Panc1 (cell line): ENCODE measurements at regions of chr1 and their contacts with region 1.

Region 1: DNA sequence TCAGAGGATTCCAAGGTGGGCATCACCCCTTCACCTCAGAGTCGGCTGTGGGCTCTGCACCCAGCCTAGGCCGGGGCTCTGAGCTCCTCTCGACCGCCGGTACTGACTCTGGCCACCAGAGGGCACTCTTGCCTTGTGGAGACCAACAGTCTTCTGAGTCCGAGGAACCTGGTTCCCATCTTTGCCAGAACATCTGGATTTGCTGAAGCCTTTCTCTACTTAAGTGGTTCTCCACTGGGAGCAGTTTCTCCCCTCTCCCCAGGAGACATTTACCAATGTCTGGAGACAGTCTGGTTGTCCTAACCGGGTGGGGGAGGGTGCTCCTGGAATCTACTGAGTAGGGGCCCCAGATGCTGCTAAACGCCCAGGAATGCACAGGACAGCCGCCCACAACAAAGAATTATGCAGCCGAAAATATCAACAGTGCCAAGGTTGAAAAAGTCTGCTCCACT is 9.4 kb downstream of the ETV3L start:
- DNase-seq: peak; percentile 55
- ATAC-seq: peak; percentile 96
- H3K4me3 ChIP-seq: no peak overlapping the region
- H3K27ac ChIP-seq: no peak overlapping the region
- H3K4me1 ChIP-seq: no peaks in the 10 kb centered on the region
- H3K27me3 ChIP-seq: no peaks in the 10 kb centered on the region
- CTCF ChIP-seq: peak; percentile 94

Region 2: DNA sequence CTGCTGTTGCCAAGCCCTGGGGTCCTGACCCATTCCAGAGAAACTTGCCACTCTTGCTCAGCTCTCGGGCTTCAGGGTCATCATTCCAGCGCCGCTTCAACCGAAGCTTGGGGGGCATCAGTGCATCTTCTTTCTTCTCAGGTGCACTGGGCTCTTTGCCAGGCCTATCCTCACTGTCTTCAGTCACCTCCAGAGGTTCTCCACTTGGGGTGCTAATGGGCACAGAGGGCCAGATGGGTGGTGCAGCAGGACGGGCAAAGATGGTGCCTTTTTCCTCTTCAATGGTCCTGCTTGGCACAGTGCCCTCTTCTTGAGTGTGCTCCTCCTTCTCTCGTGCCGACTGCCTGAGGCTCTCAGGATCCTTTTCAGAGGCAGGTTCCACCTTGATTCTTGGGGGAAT is 34.6 kb after region 1 on chr1:
- CTCF ChIA-PET with region 1: interaction called, 11 read pairs
- POLR2A ChIA-PET with region 1: no interaction called
- in situ Hi-C with region 1: no loop called
- intact Hi-C with region 1: no loop called
- DNase-seq: no peak
- ATAC-seq: no peak
- H3K4me3 ChIP-seq: no peak overlapping the region
- H3K27ac ChIP-seq: no peak overlapping the region
- H3K4me1 ChIP-seq: no peaks in the 10 kb centered on the region
- H3K27me3 ChIP-seq: no peaks in the 10 kb centered on the region
- CTCF ChIP-seq: no peak

Region 3: GRCh38 chr1:157156058-157156541 is 65.9 kb after region 1 on chr1:
- CTCF ChIA-PET with region 1: interaction called, 85 read pairs
- POLR2A ChIA-PET with region 1: interaction called, 3 read pairs
- in situ Hi-C with region 1: no loop called
- intact Hi-C with region 1: loop called (anchors 1 kb)
- DNase-seq: no peak
- ATAC-seq: peak; percentile 88
- H3K4me3 ChIP-seq: peak overlapping the region in 1 of 2 experiments; percentile 24; a peak in 1 of 4 replicates
- H3K27ac ChIP-seq: no peak overlapping the region
- H3K4me1 ChIP-seq: no peaks in the 10 kb centered on the region; the same call in none of the 2 replicates
- H3K27me3 ChIP-seq: 0 out of 2 replicates have a peak, but pooled peaks cover 4% of the 10 kb centered on the region
- CTCF ChIP-seq: peak; percentile 97

Region 4: DNA sequence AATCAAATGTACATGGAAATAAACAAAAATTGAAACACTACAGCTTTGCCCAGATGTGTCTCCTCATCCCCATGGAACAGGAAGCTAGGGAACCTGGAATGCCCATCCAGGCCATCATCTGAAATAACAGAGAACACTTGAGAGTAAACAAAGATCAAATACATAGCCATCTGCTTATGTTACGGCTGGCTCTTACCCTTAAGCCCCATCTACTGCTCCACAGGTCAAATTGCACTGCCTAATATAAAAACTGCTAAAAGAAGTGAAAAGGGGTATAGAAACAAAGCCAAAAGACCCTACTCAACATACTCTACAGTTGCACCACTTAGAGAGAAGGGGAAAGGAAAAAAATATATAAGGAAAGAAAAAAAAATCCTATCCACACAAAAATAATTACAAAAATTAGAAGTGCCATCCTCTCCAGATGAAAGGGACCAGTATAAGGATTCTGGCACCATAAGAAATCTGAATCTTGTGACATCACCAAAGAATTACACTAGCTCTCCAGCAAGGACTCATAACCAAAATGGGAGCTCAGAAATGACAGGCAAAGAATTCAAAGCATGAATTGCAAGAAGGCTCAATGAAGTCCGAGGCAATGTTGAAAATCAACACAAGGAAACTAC is 1437.1 kb after region 1 on chr1:
- CTCF ChIA-PET with region 1: no interaction called
- POLR2A ChIA-PET with region 1: no interaction called
- in situ Hi-C with region 1: no loop called
- intact Hi-C with region 1: no loop called
- DNase-seq: no peak
- ATAC-seq: no peak
- H3K4me3 ChIP-seq: no peak overlapping the region
- H3K27ac ChIP-seq: no peak overlapping the region
- H3K4me1 ChIP-seq: no peaks in the 10 kb centered on the region
- H3K27me3 ChIP-seq: no peaks in the 10 kb centered on the region
- CTCF ChIP-seq: no peak